PC-3 (cell line): ENCODE measurements at regions of chr1 and their contacts with region 1.

Region 1: DNA sequence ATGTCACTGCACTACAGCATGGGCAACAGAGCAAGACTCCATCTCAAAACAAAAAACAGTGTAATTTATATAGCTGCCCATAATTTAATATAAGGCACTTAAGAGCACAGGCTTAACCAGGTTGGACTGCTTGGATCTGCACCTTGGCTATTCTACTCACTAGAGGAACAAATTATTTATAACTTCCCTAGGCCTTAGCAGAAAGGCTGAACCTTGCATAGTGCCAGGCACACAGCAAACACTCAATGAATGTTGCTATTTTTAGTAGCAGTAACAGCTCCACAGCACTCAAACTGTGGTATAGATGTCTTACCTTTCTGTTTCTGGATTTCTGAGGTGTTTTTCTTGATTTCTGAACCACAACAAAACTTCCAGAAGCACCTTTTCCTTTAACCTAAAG is 19.8 kb downstream of the HP1BP3 start:
- DNase-seq: no peak
- ATAC-seq: no peak
- H3K4me3 ChIP-seq: no peak overlapping the region
- H3K27ac ChIP-seq: no peak overlapping the region
- H3K4me1 ChIP-seq: no peaks in the 10 kb centered on the region
- H3K27me3 ChIP-seq: no peaks in the 10 kb centered on the region
- CTCF ChIP-seq: no peak

Region 2: DNA sequence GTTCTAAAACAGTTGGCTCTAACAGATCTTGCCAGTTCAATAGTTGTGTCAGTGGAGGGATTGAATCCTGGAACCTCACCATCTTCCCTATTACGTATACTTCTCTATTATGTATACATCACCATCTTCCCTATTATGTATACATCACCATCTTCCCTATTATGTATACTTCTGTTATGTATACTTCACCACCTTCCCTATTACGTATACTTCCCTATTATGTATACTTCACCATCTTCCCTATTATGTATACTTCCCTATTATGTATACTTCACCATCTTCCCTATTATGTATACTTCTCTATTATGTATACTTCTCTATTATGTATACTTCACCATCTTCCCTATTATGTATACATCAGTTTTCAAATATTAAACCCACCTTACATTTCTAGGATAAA is 54.2 kb after region 1 on chr1:
- CTCF ChIA-PET with region 1: no interaction called
- POLR2A ChIA-PET with region 1: no interaction called
- intact Hi-C with region 1: no loop called
- DNase-seq: no peak
- ATAC-seq: no peak
- H3K4me3 ChIP-seq: no peak overlapping the region
- H3K27ac ChIP-seq: no peak overlapping the region
- H3K4me1 ChIP-seq: no peaks in the 10 kb centered on the region
- H3K27me3 ChIP-seq: no peaks in the 10 kb centered on the region
- CTCF ChIP-seq: no peak

Region 3: GRCh38 chr1:20847611-20848080 is 80.4 kb after region 1 on chr1:
- CTCF ChIA-PET with region 1: no interaction called
- POLR2A ChIA-PET with region 1: interaction called, 13 read pairs
- intact Hi-C with region 1: no loop called
- DNase-seq: peak; percentile 89
- ATAC-seq: peak; percentile 83
- H3K4me3 ChIP-seq: no peak overlapping the region
- H3K27ac ChIP-seq: peak overlapping the region; percentile 85
- H3K4me1 ChIP-seq: peaks cover 28% of the 10 kb centered on the region
- H3K27me3 ChIP-seq: no peaks in the 10 kb centered on the region
- CTCF ChIP-seq: no peak